ENCODE measurements at regions of chr5 and their contacts with region 1.

Region 1: DNA sequence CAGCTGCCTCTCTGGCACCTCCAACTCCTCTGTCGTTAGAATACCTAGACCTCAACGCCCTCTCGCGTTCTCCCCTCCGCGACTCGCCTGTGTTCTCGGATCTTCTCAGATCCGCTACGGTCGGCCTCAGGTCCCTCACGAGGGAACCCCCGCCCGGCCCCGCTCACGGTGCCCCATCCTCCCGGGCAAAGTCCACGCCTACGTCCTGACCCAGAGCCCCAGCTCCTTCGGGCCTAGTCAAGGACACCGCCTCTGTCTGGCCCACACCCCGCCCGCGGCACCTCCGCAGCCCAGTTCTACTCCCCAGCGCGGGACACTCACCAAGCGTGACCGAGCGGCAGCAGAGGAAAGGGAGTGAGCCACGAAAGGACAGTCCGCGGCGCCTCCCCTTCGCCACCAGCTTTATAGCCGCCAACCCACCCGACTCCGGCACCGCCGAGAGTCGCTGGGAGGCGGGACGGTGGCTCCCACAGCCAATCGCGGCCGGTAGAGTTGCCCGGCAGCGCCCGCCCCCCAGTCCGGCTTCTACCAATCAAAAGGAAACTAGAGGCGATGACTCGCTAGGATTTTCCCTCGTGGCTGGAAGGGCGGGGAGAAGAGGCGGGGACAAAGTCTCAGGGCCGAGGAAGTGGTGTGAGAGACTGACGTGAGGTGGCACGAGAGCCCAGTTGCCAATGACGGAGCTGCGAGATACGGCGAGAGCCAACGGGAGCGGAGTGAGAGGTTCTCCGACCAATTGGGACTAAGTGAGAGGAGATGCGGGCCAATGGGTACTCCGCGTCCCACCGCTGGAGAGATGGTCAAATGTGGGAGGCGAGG is at the start of gene HMGCS1:
- DNase-seq: peak; percentile 100
- H3K4me3 ChIP-seq: peak within 1 kb of the TSS; percentile 73 to 91 (median 75)
- H3K27ac ChIP-seq: peak within 1 kb of the TSS; percentile 43
- H3K4me1 ChIP-seq: peaks cover 35% of the 10 kb centered on the region
- H3K27me3 ChIP-seq: no peaks in the 10 kb centered on the region
- CTCF ChIP-seq: peak in 1 of 2 donors; percentile 5
- POLR2A ChIP-seq: peak; percentile 57
- total RNA-seq, gene HMGCS1: 133 and 149 TPM in 2 replicates

Region 2: GRCh38 chr5:41794473-41794872 is 1518.8 kb before region 1 on chr5:
- CTCF ChIA-PET with region 1: no interaction called
- POLR2A ChIA-PET with region 1: no interaction called
- dilution Hi-C with region 1: no loop called
- intact Hi-C with region 1: loop called (anchors 5 kb)
- DNase-seq: peak; percentile 95
- H3K4me3 ChIP-seq: peak overlapping the region in 1 of 3 experiments; percentile 47
- H3K27ac ChIP-seq: peak overlapping the region; percentile 97
- H3K4me1 ChIP-seq: peaks cover 52% of the 10 kb centered on the region
- H3K27me3 ChIP-seq: no peaks in the 10 kb centered on the region
- CTCF ChIP-seq: no peak
- POLR2A ChIP-seq: peak; percentile 43

Region 3: DNA sequence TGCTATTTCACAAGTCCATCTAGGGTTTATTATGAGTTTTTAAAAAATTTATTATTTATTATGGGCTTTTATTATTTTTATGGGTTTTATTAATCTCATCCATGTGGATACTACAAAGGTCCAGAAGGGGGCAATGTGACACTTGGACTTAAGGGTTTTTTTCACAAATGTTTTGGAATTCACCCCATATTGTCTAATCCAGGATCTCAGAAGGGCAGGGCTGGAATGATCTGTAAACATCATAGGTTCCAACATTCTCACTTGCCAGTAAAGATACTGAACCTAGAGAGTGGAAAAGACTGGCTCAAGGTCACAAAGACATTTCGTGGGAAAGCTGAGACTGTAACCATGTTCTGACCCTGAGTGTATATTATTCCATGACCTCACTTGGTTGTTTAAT is 85.6 kb before region 1 on chr5:
- CTCF ChIA-PET with region 1: no interaction called
- POLR2A ChIA-PET with region 1: interaction called, 5 read pairs
- dilution Hi-C with region 1: no loop called
- intact Hi-C with region 1: loop called (anchors 5 kb)
- DNase-seq: peak; percentile 44
- H3K4me3 ChIP-seq: no peak overlapping the region
- H3K27ac ChIP-seq: no peak overlapping the region
- H3K4me1 ChIP-seq: no peaks in the 10 kb centered on the region
- H3K27me3 ChIP-seq: peaks cover 2% of the 10 kb centered on the region in 2 experiments
- CTCF ChIP-seq: peak; percentile 28 to 41
- POLR2A ChIP-seq: no peak

Region 4: GRCh38 chr5:43256261-43256966 is 56.8 kb before region 1 on chr5:
- CTCF ChIA-PET with region 1: no interaction called
- POLR2A ChIA-PET with region 1: no interaction called
- dilution Hi-C with region 1: no loop called
- intact Hi-C with region 1: no loop called
- DNase-seq: no peak
- H3K4me3 ChIP-seq: no peak overlapping the region
- H3K27ac ChIP-seq: no peak overlapping the region
- H3K4me1 ChIP-seq: no peaks in the 10 kb centered on the region
- H3K27me3 ChIP-seq: peaks cover 2 to 5% of the 10 kb centered on the region in 2 experiments
- CTCF ChIP-seq: no peak
- POLR2A ChIP-seq: no peak

Region 5: DNA sequence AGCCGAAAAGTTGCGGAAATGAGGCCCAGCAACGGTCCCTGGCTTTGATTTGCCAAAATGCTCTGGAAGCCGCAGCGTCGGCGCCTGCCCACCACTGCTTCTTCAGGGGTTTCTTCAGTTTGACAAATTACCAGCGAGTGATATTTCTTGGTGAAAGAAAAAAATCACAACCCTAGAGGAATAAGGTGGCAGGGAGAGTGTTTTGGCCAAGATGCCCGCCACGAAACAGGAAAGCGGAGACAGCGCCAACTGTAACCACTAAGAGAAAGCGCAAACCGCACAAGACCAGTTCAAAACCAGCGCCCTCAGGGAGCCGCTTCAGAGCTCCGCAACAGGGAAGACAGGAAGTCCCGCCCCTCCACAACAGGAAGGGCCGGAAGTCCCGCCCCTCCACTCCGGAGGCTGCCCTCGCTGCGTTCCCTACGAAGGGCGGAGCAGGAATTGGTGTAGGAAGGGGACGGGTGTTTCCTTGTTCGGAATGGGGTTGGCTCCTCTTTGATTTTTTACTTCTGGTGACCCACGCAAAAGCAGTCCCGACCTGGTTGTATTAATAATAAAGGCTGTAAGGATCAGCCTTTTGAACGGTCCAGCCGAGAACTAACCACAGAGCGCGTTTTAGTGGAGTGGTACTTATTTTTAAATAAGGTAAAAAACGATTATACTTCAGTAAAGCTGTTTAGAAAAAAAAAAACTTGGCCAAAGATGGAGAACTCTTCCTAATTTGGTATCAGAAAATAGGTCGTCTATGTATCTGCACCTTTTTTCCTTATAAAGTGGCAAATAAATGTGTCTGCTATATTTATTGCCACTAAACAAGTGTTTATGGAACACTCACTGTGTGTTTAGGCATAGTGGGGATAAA is 201.8 kb after region 1 on chr5 and contains the start of gene C5orf34:
- CTCF ChIA-PET with region 1: interaction called, 4 read pairs
- POLR2A ChIA-PET with region 1: no interaction called
- dilution Hi-C with region 1: no loop called
- intact Hi-C with region 1: loop called (anchors 1 kb)
- DNase-seq: peak; percentile 97
- H3K4me3 ChIP-seq: peak within 1 kb of the TSS; percentile 68 to 93 (median 89)
- H3K27ac ChIP-seq: peak within 1 kb of the TSS; percentile 92
- H3K4me1 ChIP-seq: peaks cover 11% of the 10 kb centered on the region
- H3K27me3 ChIP-seq: no peaks in the 10 kb centered on the region
- CTCF ChIP-seq: no peak
- POLR2A ChIP-seq: peak; percentile 93
- total RNA-seq, gene C5orf34: 5.0 and 6.5 TPM in 2 replicates

Region 6: DNA sequence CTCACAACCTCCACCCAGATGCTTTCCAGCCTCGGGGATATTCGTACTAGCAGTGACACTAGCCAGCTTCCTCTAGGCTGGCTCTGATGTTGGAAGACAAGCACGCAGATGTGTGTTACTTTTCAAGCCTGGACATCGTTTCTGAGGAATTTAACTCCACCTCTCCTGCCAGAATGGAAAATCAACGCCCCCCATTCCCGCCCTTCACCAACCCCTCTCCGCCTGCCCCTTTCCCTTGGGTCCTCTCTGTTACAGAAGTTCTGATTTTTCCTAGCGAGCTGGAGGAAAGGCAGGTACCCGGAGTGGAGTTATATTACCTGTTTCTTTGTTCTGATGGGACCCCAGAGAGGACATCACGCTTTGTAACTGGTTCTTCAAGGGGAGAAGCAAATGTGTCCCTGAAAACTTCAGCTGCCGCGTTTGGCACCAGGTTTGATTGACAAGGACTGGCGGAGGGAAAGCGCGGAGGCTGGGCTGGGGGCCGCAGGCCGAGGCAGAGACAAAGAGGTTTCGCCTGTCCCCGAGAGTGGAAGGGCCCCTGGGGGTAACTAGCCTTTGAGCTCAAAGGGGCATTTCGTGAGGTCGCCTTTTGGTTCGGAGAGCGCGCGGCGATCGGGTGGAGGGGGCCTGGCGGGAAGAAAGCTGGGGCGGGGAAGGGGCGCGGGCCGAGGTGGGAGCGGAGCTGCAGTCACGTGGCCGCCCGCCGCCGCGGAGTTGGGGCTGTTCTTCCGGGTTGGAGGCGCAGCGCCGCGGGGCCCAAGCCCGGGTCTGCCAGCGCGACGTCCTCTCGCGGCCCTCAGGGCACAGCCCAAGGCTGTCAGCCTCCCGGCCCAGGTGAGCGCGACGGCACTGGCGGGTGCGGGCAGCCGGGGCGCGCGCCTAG is 289.5 kb after region 1 on chr5 and contains the start of gene NNT:
- CTCF ChIA-PET with region 1: no interaction called
- POLR2A ChIA-PET with region 1: no interaction called
- dilution Hi-C with region 1: no loop called
- intact Hi-C with region 1: loop called (anchors 5 kb)
- DNase-seq: peak; percentile 70
- H3K4me3 ChIP-seq: peak within 1 kb of the TSS; percentile 53 to 86 (median 80)
- H3K27ac ChIP-seq: peak within 1 kb of the TSS; percentile 88
- H3K4me1 ChIP-seq: peaks cover 19% of the 10 kb centered on the region
- H3K27me3 ChIP-seq: no peaks in the 10 kb centered on the region
- CTCF ChIP-seq: no peak
- POLR2A ChIP-seq: no peak
- total RNA-seq, gene NNT: 75.6 and 82.5 TPM in 2 replicates

Measured in endothelial cell of umbilical vein (primary cell).